OCI-LY7 (cell line): ENCODE measurements at regions of chr1 and their contacts with region 1.

Region 1: DNA sequence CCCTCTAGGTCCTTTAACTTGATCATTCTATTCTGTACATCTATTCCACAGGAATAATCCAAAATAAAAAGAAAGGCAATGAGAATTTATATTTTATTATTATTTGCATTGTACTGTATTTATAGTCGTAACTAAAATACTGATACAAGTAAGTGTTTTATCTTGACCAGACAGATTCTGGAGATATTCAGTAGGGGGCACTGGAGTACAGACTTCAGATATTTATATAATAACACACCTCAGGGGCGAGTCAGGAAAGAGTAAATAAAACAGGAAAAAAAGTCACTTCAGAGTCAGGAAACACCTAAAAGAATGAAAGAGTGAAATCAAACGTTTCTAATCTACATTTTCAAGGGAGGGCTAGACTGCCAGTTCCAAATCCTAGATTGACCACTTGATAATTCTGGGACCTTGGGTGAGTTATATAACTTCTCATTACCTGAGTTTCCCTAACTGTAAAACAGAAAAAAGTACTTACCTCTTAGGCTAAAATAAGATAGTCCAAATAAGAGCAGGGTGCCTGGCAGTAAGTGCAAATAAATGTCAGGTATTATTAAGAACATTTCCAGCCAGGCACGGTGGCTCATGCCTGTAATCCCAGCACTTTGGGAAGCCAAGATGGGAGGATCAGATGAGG is 31.1 kb upstream of the MTF1 start:
- DNase-seq: peak; percentile 75
- H3K4me3 ChIP-seq: no peak overlapping the region
- H3K27ac ChIP-seq: no peak overlapping the region
- H3K4me1 ChIP-seq: peaks cover 12% of the 10 kb centered on the region
- CTCF ChIP-seq: peak; percentile 96

Region 2: DNA sequence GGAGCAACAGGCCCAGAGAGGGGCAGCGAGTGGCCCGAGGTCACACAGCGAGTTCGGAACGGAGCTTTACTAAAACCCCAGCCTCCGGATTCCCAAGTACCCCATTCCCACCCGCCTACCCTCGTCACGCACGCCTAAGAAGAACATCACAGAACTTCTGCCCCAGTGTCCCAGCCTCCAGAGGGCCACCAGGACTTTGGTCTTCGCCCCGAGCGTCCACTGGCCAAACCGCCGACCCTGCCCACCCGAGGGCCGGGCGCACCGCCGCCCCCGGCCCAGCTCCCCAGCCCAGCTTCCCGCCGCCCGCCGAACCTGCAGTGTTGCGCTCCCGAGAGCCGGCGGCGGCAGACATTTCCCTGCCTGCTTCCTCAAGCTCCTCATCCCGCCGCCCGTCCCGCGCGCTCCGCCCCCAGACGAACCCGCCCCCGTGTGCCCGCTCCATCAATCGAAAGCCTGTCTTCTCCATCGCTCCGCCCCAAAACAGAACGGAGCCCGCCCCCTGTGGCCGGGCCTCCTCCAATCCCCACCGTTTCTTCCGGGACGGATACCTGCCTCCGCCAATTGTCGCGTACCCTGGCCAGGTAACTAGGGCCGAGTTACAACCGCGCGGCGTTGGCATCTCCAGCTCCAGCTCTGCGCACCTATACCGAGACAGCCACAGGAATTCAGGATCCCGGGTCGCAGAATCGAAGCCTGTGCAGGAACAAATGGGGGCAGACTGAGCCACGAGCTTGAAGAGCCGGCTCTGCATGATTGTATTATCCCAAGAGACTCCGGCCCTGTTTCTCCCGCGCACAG is 41.1 kb after region 1 on chr1:
- CTCF ChIA-PET with region 1: interaction called, 3 read pairs
- POLR2A ChIA-PET with region 1: interaction called, 7 read pairs
- intact Hi-C with region 1: loop called (anchors 2 kb)
- DNase-seq: peak; percentile 97
- H3K4me3 ChIP-seq: peak overlapping the region; percentile 89
- H3K27ac ChIP-seq: peak overlapping the region; percentile 64
- H3K4me1 ChIP-seq: peaks cover 47% of the 10 kb centered on the region
- CTCF ChIP-seq: no peak

Region 3: GRCh38 chr1:37974567-37974966 is 84.1 kb after region 1 on chr1:
- CTCF ChIA-PET with region 1: no interaction called
- POLR2A ChIA-PET with region 1: no interaction called
- intact Hi-C with region 1: loop called (anchors 2 kb)
- DNase-seq: no peak
- H3K4me3 ChIP-seq: no peak overlapping the region
- H3K27ac ChIP-seq: no peak overlapping the region
- H3K4me1 ChIP-seq: no peaks in the 10 kb centered on the region
- CTCF ChIP-seq: no peak

Region 4: DNA sequence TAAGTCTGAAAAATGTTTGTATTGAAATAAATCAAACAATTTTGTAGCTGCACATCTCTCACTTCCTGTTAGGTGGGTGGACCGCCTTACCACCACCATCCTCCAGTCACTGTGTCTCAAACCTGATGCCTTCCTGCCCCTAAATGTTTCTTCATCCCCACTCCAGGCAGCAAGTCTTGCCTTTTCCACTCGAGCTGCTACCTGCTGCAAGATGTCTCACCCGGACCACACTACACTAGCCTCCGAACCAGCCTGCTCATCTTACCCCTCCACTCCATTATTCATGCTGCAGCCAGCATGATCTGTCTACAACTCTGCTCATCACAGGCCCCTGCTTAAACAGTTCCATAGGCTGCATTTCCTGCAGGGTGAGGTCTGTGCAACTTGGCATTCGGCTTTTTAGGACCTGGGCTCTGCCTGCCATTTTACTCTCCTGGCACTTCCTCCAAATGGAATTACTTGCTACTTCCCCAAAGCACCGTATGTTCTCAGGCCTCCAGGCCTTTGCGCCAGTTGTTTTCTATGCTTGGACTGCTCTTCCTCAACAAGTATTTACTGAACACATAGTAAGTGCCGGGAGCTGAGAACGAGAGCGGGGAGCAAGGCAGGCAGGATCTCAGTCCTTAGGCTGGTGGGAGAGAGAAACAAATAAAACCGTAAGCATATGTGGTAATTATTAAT is 104.5 kb after region 1 on chr1:
- CTCF ChIA-PET with region 1: no interaction called
- POLR2A ChIA-PET with region 1: no interaction called
- intact Hi-C with region 1: loop called (anchors 5 kb)
- DNase-seq: no peak
- H3K4me3 ChIP-seq: no peak overlapping the region
- H3K27ac ChIP-seq: no peak overlapping the region
- H3K4me1 ChIP-seq: peaks cover 29% of the 10 kb centered on the region
- CTCF ChIP-seq: no peak

Region 5: DNA sequence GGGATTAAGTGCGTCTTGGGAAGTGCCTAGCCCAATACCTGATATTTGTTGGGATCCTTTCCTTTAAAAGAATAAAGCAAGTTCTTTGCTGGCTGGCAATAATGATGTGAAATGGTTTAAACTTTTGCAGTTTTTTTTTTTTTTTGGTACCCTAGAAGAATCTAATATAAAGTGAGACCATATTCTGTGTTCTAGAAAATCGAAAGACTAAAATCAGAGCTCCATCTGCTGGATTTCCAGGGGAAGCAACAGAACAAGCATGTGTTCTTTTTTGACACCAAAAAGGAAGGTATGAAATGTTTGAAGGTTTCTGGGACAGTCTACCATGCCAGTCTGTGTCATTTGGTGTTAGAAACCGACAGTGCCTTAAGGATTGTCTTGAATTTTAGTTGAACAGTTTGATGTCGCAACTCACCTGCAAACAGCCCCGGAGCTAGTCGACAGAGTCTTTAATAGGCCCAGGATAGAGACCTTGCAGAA is 128.4 kb after region 1 on chr1:
- CTCF ChIA-PET with region 1: no interaction called
- POLR2A ChIA-PET with region 1: no interaction called
- intact Hi-C with region 1: loop called (anchors 1 kb)
- DNase-seq: peak; percentile 60
- H3K4me3 ChIP-seq: no peak overlapping the region
- H3K27ac ChIP-seq: no peak overlapping the region
- H3K4me1 ChIP-seq: peaks cover 8% of the 10 kb centered on the region
- CTCF ChIP-seq: peak; percentile 89

Region 6: DNA sequence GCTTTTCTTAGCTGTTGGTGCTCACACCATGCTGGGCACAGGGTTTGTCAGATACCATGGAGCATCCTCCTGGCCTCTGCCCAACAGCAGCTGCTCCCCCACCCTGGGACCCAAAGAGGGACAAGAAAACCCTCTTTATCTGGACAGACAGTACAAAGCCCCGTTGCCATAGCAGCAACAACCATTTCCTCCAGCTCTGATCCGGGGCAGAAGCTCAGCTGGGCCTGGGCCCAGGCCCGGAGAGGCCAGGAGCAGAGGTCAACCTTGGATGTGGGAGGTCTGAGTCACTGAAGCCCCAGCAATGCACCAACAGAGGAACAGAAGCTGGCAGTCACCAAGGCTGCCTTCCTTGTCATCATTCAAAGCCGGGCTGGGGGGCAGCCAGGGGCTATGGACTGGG is 384.5 kb after region 1 on chr1:
- CTCF ChIA-PET with region 1: no interaction called
- POLR2A ChIA-PET with region 1: no interaction called
- intact Hi-C with region 1: no loop called
- DNase-seq: no peak
- H3K4me3 ChIP-seq: no peak overlapping the region
- H3K27ac ChIP-seq: no peak overlapping the region
- H3K4me1 ChIP-seq: no peaks in the 10 kb centered on the region
- CTCF ChIP-seq: no peak